ENCODE measurements at regions of chr2 and their contacts with region 1.

Region 1: DNA sequence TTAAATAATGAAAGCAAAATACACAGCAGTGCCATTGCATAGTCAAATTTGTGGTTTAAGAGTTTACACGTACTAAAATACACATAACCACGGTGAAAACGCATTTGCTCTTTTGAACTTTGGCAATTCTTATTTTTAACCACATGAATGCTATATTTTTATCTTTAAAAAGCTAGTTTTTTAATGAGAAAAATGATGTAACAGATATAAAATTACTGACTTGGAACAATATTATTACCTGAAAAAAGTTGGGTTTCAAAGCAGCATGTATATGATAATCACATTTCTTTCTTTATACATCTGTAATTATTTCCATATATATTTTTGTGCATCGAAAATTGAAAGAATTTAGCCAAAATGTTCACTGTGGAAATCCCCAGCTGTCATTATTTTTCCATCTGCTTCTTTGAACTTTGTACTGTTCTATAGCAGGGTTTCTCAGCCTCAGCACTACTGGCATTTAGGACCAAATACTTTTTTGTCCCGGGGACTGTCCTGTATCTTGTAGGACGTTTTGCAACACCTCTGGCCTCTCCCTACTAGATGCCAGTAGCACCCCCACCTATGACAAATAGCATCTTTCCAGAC is 75.9 kb upstream of the CAB39 start:
- DNase-seq: no peak
- ATAC-seq: no peak
- H3K4me3 ChIP-seq: no peak overlapping the region
- H3K27ac ChIP-seq: no peak overlapping the region
- H3K4me1 ChIP-seq: no peaks in the 10 kb centered on the region
- H3K27me3 ChIP-seq: no peaks in the 10 kb centered on the region; a peak in 1 of 5 replicates
- CTCF ChIP-seq: no peak
- EP300 ChIP-seq: no peak
- POLR2A ChIP-seq: no peak
- RAD21 ChIP-seq: no peak

Region 2: DNA sequence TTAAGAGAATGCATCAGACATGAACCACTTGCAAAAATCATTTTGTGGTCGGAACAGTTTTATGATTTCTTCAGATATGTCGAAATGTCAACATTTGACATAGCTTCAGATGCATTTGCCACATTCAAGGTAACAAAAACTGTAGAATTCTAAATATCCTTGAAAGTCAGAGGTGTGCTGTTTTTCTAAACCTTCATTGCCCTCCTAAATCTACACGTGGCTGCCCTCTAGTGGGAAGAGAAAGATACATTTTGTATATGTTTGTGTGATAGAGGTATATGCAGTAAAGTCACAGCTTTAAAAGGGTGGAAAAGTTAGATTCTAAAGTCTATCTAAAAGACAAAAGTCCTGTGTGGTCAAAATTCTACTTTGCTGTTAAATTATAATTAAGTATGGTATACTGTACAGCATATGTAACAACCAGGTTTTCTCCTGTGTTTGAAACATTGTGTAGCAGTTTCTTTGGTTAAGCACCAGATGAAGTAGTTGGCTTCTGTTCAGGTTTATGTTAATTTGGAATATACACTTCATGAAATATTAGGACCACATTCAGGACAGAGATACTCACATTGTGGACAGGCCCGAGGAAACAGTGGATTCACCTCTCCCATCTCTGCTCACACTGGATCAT is 162.1 kb after region 1 on chr2:
- CTCF ChIA-PET with region 1: no interaction called
- POLR2A ChIA-PET with region 1: no interaction called
- in situ Hi-C with region 1: no loop called
- intact Hi-C with region 1: loop called (anchors 10 kb)
- DNase-seq: peak; percentile 63
- ATAC-seq: peak; percentile 81
- H3K4me3 ChIP-seq: no peak overlapping the region
- H3K27ac ChIP-seq: no peak overlapping the region
- H3K4me1 ChIP-seq: no peaks in the 10 kb centered on the region
- H3K27me3 ChIP-seq: no peaks in the 10 kb centered on the region
- CTCF ChIP-seq: peak; percentile 82
- EP300 ChIP-seq: no peak
- POLR2A ChIP-seq: no peak
- RAD21 ChIP-seq: peak; percentile 48; the same call in 1 of the 2 replicates